Common myeloid progenitor, CD34-positive (primary cell): ENCODE measurements at regions of chr1 and their contacts with region 1.

Region 1: DNA sequence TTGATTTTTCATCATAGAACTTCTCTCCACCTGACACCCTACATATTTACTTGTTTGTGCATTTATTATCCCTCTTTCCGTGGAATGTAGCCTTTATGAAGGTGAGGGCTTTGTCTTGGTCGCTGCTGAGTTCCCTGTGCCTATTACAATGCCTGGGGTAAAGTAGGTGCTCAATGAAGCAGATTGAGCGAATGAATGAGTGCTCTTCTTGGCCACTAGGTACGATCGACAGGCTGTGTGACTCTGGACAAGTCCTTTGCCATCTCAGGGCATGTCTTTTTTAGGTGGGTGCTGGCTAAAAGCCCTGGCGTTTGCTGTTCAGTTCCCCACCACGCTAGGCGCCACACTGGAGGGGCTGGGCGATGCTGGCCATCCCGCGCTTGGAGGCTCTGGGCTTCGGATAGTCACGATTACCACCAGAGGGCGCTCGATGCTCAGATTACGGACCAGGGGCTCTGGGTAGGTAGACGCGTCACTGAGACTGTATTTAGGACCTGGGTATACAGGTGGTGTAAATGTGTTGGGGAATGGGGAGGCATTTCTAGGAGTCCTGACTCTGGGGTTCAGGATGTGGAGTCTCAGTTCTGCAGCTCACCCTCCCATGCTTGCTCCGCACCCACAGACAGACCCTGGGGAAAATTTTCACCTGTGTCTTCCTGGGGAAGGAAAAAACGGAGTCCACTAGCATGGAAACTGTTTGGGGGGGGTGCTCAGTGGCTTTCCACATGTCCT is 71.0 kb upstream of the CSF3R start:
- DNase-seq: peak; percentile 64 to 78 (median 72)
- H3K4me3 ChIP-seq: no peak overlapping the region
- H3K27ac ChIP-seq: no peak overlapping the region
- H3K4me1 ChIP-seq: no peaks in the 10 kb centered on the region
- H3K27me3 ChIP-seq: peaks cover 4 to 34% (median 24%) of the 10 kb centered on the region in 5 experiments

Region 2: DNA sequence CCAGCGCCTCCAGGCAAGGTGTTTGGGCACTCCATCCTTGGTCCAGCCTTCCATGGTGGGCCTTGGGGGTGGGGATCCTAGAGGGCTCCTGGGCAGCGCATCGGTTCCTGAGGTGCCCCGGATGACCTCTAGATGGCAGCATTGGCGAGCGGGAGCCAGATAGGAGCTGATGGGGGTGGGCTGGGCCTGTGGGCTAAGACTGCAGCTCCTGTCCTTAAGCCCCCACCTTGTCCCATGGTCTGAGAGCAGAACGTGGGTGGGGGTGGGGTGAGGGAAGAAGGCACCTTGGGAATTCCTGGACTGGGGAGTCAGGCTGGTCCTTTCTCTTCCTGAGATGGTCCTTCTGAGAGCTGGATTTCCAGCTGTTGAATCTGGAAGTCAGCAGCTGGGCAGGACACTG is 22.4 kb after region 1 on chr1:
- CTCF ChIA-PET with region 1: interaction called, 10 read pairs
- POLR2A ChIA-PET with region 1: no interaction called
- DNase-seq: peak; percentile 39 to 62 (median 48)
- H3K4me3 ChIP-seq: no peak overlapping the region
- H3K27ac ChIP-seq: no peak overlapping the region
- H3K4me1 ChIP-seq: no peaks in the 10 kb centered on the region
- H3K27me3 ChIP-seq: peaks cover 0 to 40% (median 8%) of the 10 kb centered on the region in 5 experiments

Region 3: DNA sequence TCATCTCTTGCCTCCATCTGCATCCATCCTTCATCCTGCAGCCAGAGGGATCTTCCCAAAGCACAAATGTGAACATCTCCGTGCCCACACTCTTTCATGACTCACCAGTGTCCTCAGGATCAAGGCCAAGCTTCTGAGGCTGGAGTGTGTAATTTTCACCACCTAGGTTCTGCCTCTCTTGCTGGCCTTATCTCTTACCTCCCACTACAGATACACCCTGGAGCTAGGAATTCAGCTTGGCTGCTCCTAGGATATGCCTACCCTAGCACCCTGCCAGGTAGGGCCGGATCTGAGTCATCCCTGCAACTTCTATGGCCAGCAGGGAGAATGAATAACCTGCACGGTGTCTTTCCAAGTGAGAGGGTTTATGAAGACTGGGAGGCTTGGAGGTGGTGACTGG is 137.6 kb after region 1 on chr1:
- CTCF ChIA-PET with region 1: no interaction called
- POLR2A ChIA-PET with region 1: no interaction called
- DNase-seq: no peak
- H3K4me3 ChIP-seq: no peak overlapping the region
- H3K27ac ChIP-seq: no peak overlapping the region
- H3K4me1 ChIP-seq: no peaks in the 10 kb centered on the region
- H3K27me3 ChIP-seq: peaks cover 0 to 61% (median 14%) of the 10 kb centered on the region in 5 experiments

Region 4: GRCh38 chr1:36885538-36886357 is 332.0 kb after region 1 on chr1:
- CTCF ChIA-PET with region 1: no interaction called
- POLR2A ChIA-PET with region 1: no interaction called
- DNase-seq: no peak
- H3K4me3 ChIP-seq: no peak overlapping the region
- H3K27ac ChIP-seq: no peak overlapping the region
- H3K4me1 ChIP-seq: no peaks in the 10 kb centered on the region
- H3K27me3 ChIP-seq: peaks cover 0 to 19% (median 0%) of the 10 kb centered on the region in 5 experiments